AG04450 (cell line): ENCODE measurements at regions of chr3 and their contacts with region 1.

Region 1: GRCh38 chr3:64484289-64484992 is 203.4 kb downstream of the ADAMTS9 start:
- DNase-seq: peak; percentile 69
- H3K4me3 ChIP-seq: no peak overlapping the region
- H3K27ac ChIP-seq: no peak overlapping the region
- H3K27me3 ChIP-seq: no peaks in the 10 kb centered on the region
- CTCF ChIP-seq: peak; percentile 85

Region 2: DNA sequence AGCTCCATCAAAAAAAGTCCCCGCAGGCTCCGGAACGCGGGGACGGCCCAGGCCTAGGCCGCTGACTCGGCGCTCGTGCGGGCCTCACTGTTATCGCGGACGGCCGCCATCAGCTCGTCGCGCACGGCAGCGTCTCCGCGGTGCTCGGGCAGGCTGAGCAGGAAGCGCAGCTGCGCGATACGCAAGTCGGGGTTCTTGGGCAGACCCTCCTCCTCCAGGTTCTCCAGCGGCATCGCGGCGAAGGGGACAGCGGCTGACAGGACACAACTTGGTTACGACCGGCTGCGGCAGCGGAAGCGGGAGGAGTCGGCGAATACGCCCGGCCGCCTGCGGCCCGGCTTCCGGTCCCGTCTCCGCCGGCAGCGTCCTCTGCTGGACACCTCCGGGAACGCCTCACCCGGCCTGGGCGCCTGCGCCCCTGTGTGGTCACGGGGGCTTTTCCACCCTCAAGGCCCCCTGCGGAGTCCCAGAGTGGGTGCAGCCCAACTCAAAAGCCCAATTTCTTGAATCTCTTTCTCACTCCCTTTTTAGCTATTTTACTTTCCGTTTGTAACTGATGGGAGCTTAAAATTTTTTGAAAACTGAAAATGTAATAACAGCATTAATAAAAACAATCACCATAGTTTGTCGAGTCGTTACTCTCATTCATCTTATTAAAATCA is 461.1 kb before region 1 on chr3 and contains the start of gene PSMD6:
- CTCF ChIA-PET with region 1: interaction called, 75 read pairs
- POLR2A ChIA-PET with region 1: no interaction called
- DNase-seq: peak; percentile 57
- H3K4me3 ChIP-seq: peak within 1 kb of the TSS; percentile 95
- H3K27ac ChIP-seq: peak within 1 kb of the TSS; percentile 63
- H3K27me3 ChIP-seq: no peaks in the 10 kb centered on the region
- CTCF ChIP-seq: peak; percentile 100
- polyA plus RNA-seq, gene PSMD6: 69.4 and 83.6 TPM in 2 replicates

Region 3: DNA sequence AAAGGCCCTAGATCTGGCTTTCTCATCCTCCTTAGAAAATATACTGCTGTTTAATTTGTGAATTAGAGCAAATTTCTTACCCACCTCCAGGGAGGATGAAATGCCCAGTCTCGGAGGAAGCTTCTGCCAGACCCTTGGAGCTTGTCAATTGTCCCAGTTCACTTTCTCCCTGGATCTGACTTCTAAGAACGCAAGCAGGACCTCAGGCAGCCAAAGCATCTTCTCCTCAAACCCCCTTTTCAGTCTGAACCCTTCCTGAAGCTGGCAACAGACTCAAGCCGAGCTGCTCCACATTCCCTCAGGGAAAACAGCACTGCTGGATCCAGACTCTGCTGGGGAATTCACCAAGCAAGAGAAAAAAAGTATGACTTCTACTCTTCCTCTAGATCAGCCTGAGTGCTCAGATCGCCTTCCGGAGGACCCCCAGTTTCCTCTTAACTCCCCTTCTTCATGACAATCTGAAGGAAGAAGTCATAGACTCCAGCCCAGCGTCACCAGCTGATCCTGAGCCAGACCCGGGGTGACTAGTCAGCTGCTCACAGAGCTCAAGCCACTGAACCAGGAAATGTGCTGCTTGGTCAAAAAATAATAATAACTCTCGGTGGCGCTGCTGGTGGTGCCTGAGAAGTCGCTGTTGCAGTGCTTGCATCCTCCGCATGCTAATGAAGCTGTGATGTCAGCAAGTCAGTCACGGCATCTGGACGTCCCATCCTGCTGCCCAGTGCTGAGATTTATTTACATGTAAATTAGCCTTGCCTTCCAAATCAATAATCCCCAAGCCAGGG is 259.4 kb before region 1 on chr3 and contains the start of gene PRICKLE2:
- CTCF ChIA-PET with region 1: interaction called, 15 read pairs
- POLR2A ChIA-PET with region 1: no interaction called
- DNase-seq: peak; percentile 60
- H3K4me3 ChIP-seq: peak within 1 kb of the TSS; percentile 56
- H3K27ac ChIP-seq: peak within 1 kb of the TSS; percentile 87
- H3K27me3 ChIP-seq: no peaks in the 10 kb centered on the region
- CTCF ChIP-seq: no peak
- polyA plus RNA-seq, gene PRICKLE2: 14.2 and 14.7 TPM in 2 replicates

Region 4: GRCh38 chr3:64405211-64405835 is 79.1 kb before region 1 on chr3:
- CTCF ChIA-PET with region 1: interaction called, 22 read pairs
- POLR2A ChIA-PET with region 1: no interaction called
- DNase-seq: peak; percentile 51
- H3K4me3 ChIP-seq: no peak overlapping the region
- H3K27ac ChIP-seq: no peak overlapping the region
- H3K27me3 ChIP-seq: no peaks in the 10 kb centered on the region
- CTCF ChIP-seq: no peak

Region 5: DNA sequence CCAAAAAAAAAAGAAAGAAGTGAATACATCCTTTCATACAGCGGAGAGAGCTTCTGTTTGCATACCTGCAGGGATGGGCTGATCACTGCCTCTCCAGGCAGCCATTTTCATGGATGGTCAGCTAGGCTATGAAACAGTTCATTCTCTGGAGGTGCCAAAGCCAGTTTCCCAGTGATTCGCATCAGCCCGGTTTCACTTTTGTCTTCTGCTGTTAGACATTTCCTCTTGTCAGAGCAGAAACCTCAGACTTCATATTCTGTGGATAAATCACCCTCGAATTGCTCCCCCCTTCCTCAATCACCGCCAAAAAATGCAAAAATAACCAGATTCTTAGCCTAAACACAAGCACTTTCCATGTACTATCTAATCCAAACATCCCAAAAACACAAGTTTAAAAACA is 22.2 kb before region 1 on chr3:
- CTCF ChIA-PET with region 1: interaction called, 33 read pairs
- POLR2A ChIA-PET with region 1: no interaction called
- DNase-seq: peak; percentile 68
- H3K4me3 ChIP-seq: peak overlapping the region; percentile 45
- H3K27ac ChIP-seq: peak overlapping the region; percentile 80
- H3K27me3 ChIP-seq: no peaks in the 10 kb centered on the region
- CTCF ChIP-seq: no peak

Region 6: DNA sequence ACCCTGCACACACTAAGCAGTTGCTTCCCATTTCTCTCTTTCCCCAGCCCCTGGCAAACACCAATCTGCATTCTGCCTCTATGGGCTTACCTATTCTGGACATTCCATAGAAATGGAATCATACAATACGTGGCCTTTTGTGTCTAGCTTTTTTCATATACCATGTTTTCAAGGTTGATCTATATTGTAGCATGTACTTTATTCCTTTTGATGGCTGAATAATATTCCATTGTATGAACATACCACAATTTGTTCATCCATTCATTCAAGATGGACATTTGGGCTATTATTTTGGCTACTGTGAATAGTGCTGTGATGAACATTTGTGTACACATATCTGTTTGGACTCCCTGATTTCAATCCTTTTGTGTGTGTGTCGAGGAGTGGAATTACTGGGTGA is 221.5 kb after region 1 on chr3:
- CTCF ChIA-PET with region 1: no interaction called
- POLR2A ChIA-PET with region 1: no interaction called
- DNase-seq: no peak
- H3K4me3 ChIP-seq: no peak overlapping the region
- H3K27ac ChIP-seq: no peak overlapping the region
- H3K27me3 ChIP-seq: no peaks in the 10 kb centered on the region
- CTCF ChIP-seq: no peak

Region 7: GRCh38 chr3:64763980-64764379 is 279.5 kb after region 1 on chr3:
- CTCF ChIA-PET with region 1: no interaction called
- POLR2A ChIA-PET with region 1: no interaction called
- DNase-seq: no peak
- H3K4me3 ChIP-seq: no peak overlapping the region
- H3K27ac ChIP-seq: no peak overlapping the region
- H3K27me3 ChIP-seq: no peaks in the 10 kb centered on the region
- CTCF ChIP-seq: no peak